B cell (primary cell): ENCODE measurements at regions of chr3 and their contacts with region 1.

Region 1: DNA sequence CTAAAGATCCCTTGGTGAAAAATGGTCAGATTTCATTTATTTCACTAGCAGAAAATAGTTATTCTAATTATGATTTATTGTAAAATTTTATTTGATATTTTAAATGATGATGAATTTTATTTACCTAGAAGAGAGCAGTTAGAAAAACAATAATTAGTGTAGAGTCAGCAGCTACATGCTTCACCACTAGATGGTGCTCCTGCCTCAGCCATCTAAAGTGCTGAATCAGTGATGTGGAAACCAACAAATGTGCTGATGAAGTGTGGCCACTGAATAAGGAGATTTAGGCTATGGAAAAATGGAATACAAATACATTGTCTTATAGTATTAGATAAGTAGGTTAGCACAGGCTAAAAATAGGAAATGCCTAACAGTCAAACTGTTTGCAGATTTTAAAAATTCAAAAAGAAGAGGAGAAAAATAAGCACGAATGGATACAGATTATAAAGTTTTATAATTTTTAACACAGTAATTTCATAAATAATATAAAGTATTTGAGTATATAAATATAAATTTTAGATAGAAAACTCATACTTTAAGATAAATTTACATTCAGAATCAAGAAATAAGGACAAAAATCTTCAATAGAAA is 109.8 kb downstream of the PPP2R3A start:
- DNase-seq: peak; percentile 81
- ATAC-seq: peak; percentile 64
- H3K4me3 ChIP-seq: no peak overlapping the region
- H3K4me3 Mint-ChIP-seq: no peak overlapping the region
- H3K27ac ChIP-seq: no peak overlapping the region
- H3K27ac Mint-ChIP-seq: no peak overlapping the region
- H3K4me1 ChIP-seq: no peaks in the 10 kb centered on the region
- H3K4me1 Mint-ChIP-seq: no peaks in the 10 kb centered on the region
- H3K27me3 ChIP-seq: no peaks in the 10 kb centered on the region
- H3K27me3 Mint-ChIP-seq: peaks cover 4% of the 10 kb centered on the region
- CTCF ChIP-seq: peak; percentile 99

Region 2: DNA sequence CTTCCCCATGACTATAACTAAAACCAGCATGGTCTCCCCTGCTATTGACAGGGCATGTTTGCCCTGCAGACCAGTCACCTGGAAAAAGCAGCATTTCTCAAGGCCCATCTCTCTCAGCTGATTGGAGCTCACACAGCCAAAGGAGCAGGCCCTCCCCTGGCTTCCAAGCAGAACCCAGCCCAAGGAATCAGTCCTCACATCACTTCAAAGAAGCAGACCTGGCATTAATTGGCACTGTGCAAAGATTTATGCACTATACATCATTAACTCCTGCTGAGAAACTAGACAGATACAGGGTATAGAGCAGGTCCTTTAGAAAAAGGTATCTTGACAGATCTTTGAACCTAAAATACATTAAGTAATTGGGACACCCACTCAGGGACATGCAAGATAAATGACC is 433.6 kb before region 1 on chr3:
- CTCF ChIA-PET with region 1: no interaction called
- POLR2A ChIA-PET with region 1: no interaction called
- intact Hi-C with region 1: no loop called
- DNase-seq: no peak
- ATAC-seq: no peak
- H3K4me3 ChIP-seq: no peak overlapping the region
- H3K4me3 Mint-ChIP-seq: no peak overlapping the region
- H3K27ac ChIP-seq: no peak overlapping the region
- H3K27ac Mint-ChIP-seq: no peak overlapping the region
- H3K4me1 ChIP-seq: no peaks in the 10 kb centered on the region
- H3K4me1 Mint-ChIP-seq: no peaks in the 10 kb centered on the region
- H3K27me3 ChIP-seq: no peaks in the 10 kb centered on the region
- H3K27me3 Mint-ChIP-seq: no peaks in the 10 kb centered on the region
- CTCF ChIP-seq: no peak

Region 3: GRCh38 chr3:136196401-136197158 is 121.3 kb after region 1 on chr3:
- CTCF ChIA-PET with region 1: interaction called, 15 read pairs
- POLR2A ChIA-PET with region 1: no interaction called
- intact Hi-C with region 1: loop called (anchors 5 kb)
- DNase-seq: peak; percentile 99
- ATAC-seq: peak; percentile 68
- H3K4me3 ChIP-seq: peak overlapping the region; percentile 65 to 95 (median 86)
- H3K4me3 Mint-ChIP-seq: peak overlapping the region; percentile 97
- H3K27ac ChIP-seq: peak overlapping the region; percentile 91 to 99
- H3K27ac Mint-ChIP-seq: peak overlapping the region; percentile 100
- H3K4me1 ChIP-seq: peaks cover 34 to 36% of the 10 kb centered on the region in 2 donors
- H3K4me1 Mint-ChIP-seq: peaks cover 36% of the 10 kb centered on the region
- H3K27me3 ChIP-seq: no peaks in the 10 kb centered on the region
- H3K27me3 Mint-ChIP-seq: no peaks in the 10 kb centered on the region
- CTCF ChIP-seq: no peak

Region 4: GRCh38 chr3:136343446-136344281 is 268.4 kb after region 1 on chr3:
- CTCF ChIA-PET with region 1: interaction called, 3 read pairs
- POLR2A ChIA-PET with region 1: no interaction called
- intact Hi-C with region 1: loop called (anchors 5 kb)
- DNase-seq: no peak
- ATAC-seq: no peak
- H3K4me3 ChIP-seq: no peak overlapping the region
- H3K4me3 Mint-ChIP-seq: no peak overlapping the region
- H3K27ac ChIP-seq: no peak overlapping the region
- H3K27ac Mint-ChIP-seq: no peak overlapping the region
- H3K4me1 ChIP-seq: no peaks in the 10 kb centered on the region
- H3K4me1 Mint-ChIP-seq: no peaks in the 10 kb centered on the region
- H3K27me3 ChIP-seq: no peaks in the 10 kb centered on the region
- H3K27me3 Mint-ChIP-seq: no peaks in the 10 kb centered on the region
- CTCF ChIP-seq: no peak

Region 5: DNA sequence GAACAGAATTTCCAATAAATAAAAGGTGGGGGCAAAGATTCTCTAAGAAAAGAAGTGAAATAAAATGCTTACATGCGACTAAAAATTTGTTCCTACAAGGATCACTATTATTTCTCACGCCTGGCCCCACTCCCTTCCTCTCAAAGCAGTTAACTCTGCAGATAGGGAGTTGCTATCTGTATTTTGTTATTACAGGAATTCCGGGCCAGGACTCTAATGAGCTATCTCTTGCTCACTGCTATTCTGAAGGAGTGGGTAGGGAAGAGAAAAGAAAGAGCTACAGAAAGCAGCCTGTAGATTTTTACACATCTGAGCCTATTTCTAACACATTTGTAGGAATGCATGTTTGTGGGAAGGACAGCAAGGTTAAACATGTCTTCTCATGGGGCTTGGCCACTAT is 315.3 kb after region 1 on chr3:
- CTCF ChIA-PET with region 1: interaction called, 17 read pairs
- POLR2A ChIA-PET with region 1: no interaction called
- intact Hi-C with region 1: loop called (anchors 1 kb)
- DNase-seq: no peak
- ATAC-seq: no peak
- H3K4me3 ChIP-seq: no peak overlapping the region
- H3K4me3 Mint-ChIP-seq: no peak overlapping the region
- H3K27ac ChIP-seq: no peak overlapping the region
- H3K27ac Mint-ChIP-seq: no peak overlapping the region
- H3K4me1 ChIP-seq: no peaks in the 10 kb centered on the region
- H3K4me1 Mint-ChIP-seq: peaks cover 5% of the 10 kb centered on the region
- H3K27me3 ChIP-seq: no peaks in the 10 kb centered on the region
- H3K27me3 Mint-ChIP-seq: no peaks in the 10 kb centered on the region
- CTCF ChIP-seq: no peak

Region 6: DNA sequence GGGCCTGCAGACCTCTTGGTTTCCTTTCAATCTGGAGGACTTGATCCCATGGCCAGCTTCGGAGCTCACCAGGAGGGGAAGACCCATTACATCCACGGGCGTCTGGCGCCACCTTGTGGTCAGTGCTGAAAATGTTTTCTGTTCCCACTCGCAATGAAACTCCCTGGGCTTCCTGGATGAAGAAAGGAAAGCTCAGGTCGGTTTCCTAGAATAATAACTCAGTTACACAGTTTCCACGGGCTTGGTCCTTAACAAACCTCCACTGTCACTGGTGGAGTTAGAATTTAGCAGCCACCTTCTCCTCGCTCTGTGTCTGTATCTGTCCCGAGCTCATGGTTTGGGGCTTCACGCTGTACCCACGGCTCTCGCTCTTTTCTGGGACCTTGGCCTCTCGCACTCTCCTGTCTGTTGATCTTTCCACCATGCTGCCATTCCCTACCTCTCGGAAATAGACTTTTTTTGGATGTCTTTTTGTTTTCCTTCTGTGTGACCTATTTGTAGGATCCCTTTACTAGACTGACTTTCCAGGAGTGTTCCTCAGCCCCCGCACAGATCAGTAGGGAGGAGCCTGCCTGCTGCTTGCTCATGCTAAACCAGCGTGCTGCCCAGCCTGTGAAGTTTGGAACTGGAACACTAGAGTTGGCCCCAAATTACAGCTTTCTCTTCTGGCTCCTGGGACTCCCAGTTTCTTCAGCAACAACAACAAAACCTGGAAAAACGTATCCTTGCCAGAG is 938.8 kb after region 1 on chr3:
- CTCF ChIA-PET with region 1: interaction called, 147 read pairs
- POLR2A ChIA-PET with region 1: no interaction called
- intact Hi-C with region 1: loop called (anchors 1 kb)
- DNase-seq: peak; percentile 85
- ATAC-seq: peak; percentile 90
- H3K4me3 ChIP-seq: peak overlapping the region in 4 of 5 experiments; percentile 7 to 55 (median 38)
- H3K4me3 Mint-ChIP-seq: peak overlapping the region; percentile 71
- H3K27ac ChIP-seq: no peak overlapping the region
- H3K27ac Mint-ChIP-seq: no peak overlapping the region
- H3K4me1 ChIP-seq: peaks cover 5 to 9% of the 10 kb centered on the region in 2 donors
- H3K4me1 Mint-ChIP-seq: peaks cover 7% of the 10 kb centered on the region
- H3K27me3 ChIP-seq: no peaks in the 10 kb centered on the region
- H3K27me3 Mint-ChIP-seq: no peaks in the 10 kb centered on the region
- CTCF ChIP-seq: peak; percentile 95

Region 7: GRCh38 chr3:137970914-137971831 is 1895.9 kb after region 1 on chr3:
- CTCF ChIA-PET with region 1: no interaction called
- POLR2A ChIA-PET with region 1: no interaction called
- intact Hi-C with region 1: loop called (anchors 10 kb)
- DNase-seq: peak; percentile 13
- ATAC-seq: no peak
- H3K4me3 ChIP-seq: no peak overlapping the region
- H3K4me3 Mint-ChIP-seq: no peak overlapping the region
- H3K27ac ChIP-seq: no peak overlapping the region
- H3K27ac Mint-ChIP-seq: no peak overlapping the region
- H3K4me1 ChIP-seq: no peaks in the 10 kb centered on the region
- H3K4me1 Mint-ChIP-seq: no peaks in the 10 kb centered on the region
- H3K27me3 ChIP-seq: no peaks in the 10 kb centered on the region
- H3K27me3 Mint-ChIP-seq: peaks cover 9% of the 10 kb centered on the region
- CTCF ChIP-seq: peak; percentile 63